Right lobe of liver (tissue), 6 donors: ENCODE measurements at regions of chr6 and their contacts with region 1.

Region 1: DNA sequence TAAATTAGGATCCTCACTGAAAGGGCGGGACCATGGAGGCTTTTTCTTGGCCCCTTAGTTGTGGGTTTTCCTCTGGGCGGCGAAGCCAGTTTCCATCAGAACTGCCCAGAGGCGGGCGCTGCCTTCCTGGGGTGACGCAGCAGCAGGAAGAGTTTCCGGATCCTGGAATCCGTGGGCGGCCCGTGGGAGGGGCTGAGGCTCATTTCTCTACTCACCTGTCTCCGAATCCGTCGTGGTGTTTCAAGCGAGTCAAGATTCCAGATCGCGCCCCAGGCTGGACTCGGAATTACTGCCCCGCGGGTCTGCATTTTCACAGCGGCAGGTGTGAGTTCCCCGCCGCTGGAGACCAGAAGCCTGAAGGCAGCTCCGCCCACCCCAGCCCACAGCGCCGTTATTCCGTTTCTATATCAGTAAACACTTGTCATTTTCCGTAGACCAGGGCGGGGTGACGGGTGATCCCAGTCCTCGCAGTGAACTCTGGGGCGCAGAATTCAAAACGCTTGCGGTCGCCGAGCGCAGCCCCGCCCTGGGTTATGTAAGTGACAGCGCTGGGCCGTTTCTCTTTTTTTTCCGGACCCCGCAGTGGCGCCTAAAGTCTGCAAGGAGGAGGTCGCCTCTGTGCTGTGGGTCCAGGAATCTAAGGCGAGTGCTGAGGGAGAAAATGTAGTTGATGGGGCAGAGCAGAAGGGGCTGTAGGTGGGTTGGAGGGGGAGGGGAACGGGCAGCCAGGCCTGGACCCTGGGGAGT is 27.2 kb upstream of the POU5F1 start:
- DNase-seq: peak; percentile 94 to 95 (median 94)
- ATAC-seq: peak; percentile 86 to 92 (median 87)
- H3K4me3 ChIP-seq: peak overlapping the region; percentile 54 to 72 (median 72)
- H3K27ac ChIP-seq: peak overlapping the region; percentile 94 to 99 (median 95)
- H3K4me1 ChIP-seq: peaks cover 0 to 6% (median 0%) of the 10 kb centered on the region in 4 donors
- H3K27me3 ChIP-seq: no peaks in the 10 kb centered on the region
- CTCF ChIP-seq: no peak
- POLR2A ChIP-seq: peak; percentile 90

Region 2: GRCh38 chr6:30752157-30752927 is 445.4 kb before region 1 on chr6:
- intact Hi-C with region 1: no loop called
- DNase-seq: peak; percentile 59 to 78 (median 68)
- ATAC-seq: peak; percentile 45 to 65 (median 52)
- H3K4me3 ChIP-seq: no peak overlapping the region
- H3K27ac ChIP-seq: peak overlapping the region; percentile 15 to 67 (median 42)
- H3K4me1 ChIP-seq: peaks cover 0 to 16% (median 7%) of the 10 kb centered on the region in 4 donors
- H3K27me3 ChIP-seq: no peaks in the 10 kb centered on the region
- CTCF ChIP-seq: no peak
- POLR2A ChIP-seq: no peak

Region 3: DNA sequence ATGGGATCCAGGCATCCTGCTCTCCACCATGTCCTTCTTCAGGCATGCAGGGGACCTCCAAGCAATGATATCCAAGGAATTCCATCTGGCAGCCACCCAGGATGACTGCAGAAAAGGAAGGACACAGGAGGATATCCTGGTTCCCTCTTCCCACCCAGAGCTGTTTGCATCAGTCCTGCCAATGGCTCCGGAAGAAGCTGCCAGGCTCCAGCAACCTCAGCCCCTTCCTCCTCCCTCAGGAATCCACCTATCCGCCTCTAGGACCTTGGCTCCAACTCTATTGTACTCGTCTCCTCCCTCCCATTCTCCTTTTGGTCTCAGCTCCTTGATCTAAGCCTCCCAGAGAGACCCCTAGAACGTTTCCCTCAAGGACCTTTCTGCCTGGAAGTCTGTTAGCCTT is 58.1 kb before region 1 on chr6:
- intact Hi-C with region 1: loop called (anchors 5 kb)
- DNase-seq: no peak
- ATAC-seq: peak in 1 of 4 donors; percentile 22
- H3K4me3 ChIP-seq: no peak overlapping the region
- H3K27ac ChIP-seq: no peak overlapping the region
- H3K4me1 ChIP-seq: no peaks in the 10 kb centered on the region
- H3K27me3 ChIP-seq: no peaks in the 10 kb centered on the region
- CTCF ChIP-seq: no peak
- POLR2A ChIP-seq: no peak

Region 4: DNA sequence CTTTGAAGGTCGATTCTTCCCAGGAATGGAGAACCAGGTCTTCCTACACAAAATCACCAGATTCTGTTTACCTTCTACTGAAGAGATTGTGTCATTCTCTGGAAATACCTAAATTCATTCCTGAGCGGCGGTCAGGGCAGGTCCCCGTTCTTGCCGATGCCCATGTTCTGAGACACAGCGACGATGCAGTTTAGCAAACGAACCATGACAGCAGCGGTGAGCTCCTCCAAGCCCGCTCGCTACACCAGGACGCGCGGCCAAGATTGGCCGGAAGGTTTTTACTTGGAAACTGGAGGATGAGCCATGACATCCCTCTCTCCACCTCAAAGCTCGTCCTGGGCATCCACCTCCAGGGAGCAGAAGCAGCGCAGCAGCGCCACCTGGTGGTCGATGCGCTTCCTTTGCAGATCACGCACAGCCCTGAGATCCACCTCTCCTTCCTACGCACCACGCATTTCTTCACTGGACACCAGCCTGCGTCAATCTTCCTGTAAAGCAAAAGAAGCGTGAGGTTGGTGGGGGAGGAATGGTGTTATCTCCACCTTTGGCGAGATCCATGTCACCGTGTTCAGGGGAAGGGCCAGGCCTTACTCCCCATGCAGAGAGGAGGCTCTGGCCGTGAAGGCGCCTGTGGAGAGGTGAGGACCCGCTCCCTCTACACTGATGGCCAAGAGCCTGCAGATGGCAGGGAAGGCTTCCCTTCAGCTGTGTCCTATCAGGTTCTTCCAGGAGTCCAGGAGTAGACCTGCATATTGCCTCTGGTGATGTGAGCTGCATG is 169.2 kb after region 1 on chr6:
- intact Hi-C with region 1: loop called (anchors 5 kb)
- DNase-seq: peak; percentile 88 to 93 (median 93)
- ATAC-seq: peak; percentile 100
- H3K4me3 ChIP-seq: peak overlapping the region; percentile 23 to 43 (median 30)
- H3K27ac ChIP-seq: no peak overlapping the region
- H3K4me1 ChIP-seq: no peaks in the 10 kb centered on the region
- H3K27me3 ChIP-seq: no peaks in the 10 kb centered on the region
- CTCF ChIP-seq: peak; percentile 88 to 96 (median 94)
- POLR2A ChIP-seq: no peak

Region 5: GRCh38 chr6:31546962-31547726 is 349.4 kb after region 1 on chr6 and contains the start of gene NFKBIL1:
- intact Hi-C with region 1: no loop called
- DNase-seq: peak; percentile 94 to 96 (median 96)
- ATAC-seq: peak; percentile 92 to 95 (median 94)
- H3K4me3 ChIP-seq: peak within 1 kb of the TSS; percentile 32 to 61 (median 58)
- H3K27ac ChIP-seq: peak within 1 kb of the TSS; percentile 52 to 71 (median 68)
- H3K4me1 ChIP-seq: peaks cover 0 to 16% (median 7%) of the 10 kb centered on the region in 4 donors
- H3K27me3 ChIP-seq: no peaks in the 10 kb centered on the region
- CTCF ChIP-seq: no peak
- POLR2A ChIP-seq: peak; percentile 37
- total RNA-seq, gene NFKBIL1: 7.5 to 10.2 (median 8.3) TPM